ENCODE measurements at regions of chr10 and their contacts with region 1.

Region 1: GRCh38 chr10:17454161-17455014 is at the start of gene ST8SIA6:
- DNase-seq: no peak
- ATAC-seq: peak; percentile 61
- H3K4me3 ChIP-seq: peak within 1 kb of the TSS; percentile 59 to 85
- H3K27ac ChIP-seq: peak within 1 kb of the TSS; percentile 71
- H3K4me1 ChIP-seq: peaks cover 12 to 26% of the 10 kb centered on the region in 2 experiments; a peak in 3 of 4 replicates
- H3K27me3 ChIP-seq: no peaks in the 10 kb centered on the region
- CTCF ChIP-seq: no peak
- POLR2A ChIP-seq: no peak
- RAD21 ChIP-seq: no peak
- total RNA-seq, gene ST8SIA6: 1.3 TPM

Region 2: GRCh38 chr10:17029581-17030271 is 424.7 kb before region 1 on chr10:
- CTCF ChIA-PET with region 1: no interaction called
- POLR2A ChIA-PET with region 1: no interaction called
- RAD21 ChIA-PET with region 1: no interaction called
- intact Hi-C with region 1: no loop called
- DNase-seq: peak; percentile 52
- ATAC-seq: peak; percentile 86
- H3K4me3 ChIP-seq: peak overlapping the region; percentile 11 to 47
- H3K27ac ChIP-seq: peak overlapping the region; percentile 56
- H3K4me1 ChIP-seq: peaks cover 18 to 36% of the 10 kb centered on the region in 2 experiments; a peak in 3 of 4 replicates
- H3K27me3 ChIP-seq: no peaks in the 10 kb centered on the region
- CTCF ChIP-seq: no peak
- POLR2A ChIP-seq: no peak
- RAD21 ChIP-seq: 0 out of 2 replicates have a peak, but pooled peaks have one; percentile 9

Region 3: DNA sequence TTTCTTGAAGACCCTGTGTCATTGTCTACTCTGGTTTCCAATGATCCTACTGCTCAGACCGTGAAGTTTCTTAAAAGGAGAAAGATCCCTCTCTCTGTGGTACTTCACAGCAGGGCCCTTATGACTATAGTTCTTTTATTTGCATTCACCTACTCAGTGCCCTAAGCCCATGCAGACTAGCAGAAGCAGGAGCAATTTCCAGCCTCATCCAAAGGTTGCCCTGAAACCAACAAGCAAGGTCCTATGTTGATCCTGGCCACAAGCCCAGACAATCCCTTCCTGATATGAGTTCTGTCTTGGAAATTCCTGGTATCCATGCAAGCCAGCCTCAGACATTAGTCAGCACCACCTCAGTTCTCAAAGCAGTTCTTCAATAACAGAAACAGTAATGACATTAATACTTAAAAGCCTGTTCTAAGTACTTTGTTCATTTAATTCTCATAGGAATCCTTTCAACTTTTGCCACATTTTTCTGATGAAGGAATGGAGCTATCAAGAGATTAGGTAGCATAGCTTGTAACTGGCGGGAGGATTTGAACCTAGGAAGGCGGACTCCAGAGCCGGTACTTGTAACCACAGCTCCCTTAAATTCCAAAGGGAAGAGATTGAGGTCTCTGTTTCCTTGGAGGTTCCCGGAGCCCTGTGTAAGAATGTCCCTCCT is 58.1 kb after region 1 on chr10:
- CTCF ChIA-PET with region 1: interaction called, 5 read pairs
- POLR2A ChIA-PET with region 1: interaction called, 3 read pairs
- RAD21 ChIA-PET with region 1: no interaction called
- intact Hi-C with region 1: loop called (anchors 5 kb)
- DNase-seq: peak; percentile 93
- ATAC-seq: peak; percentile 86
- H3K4me3 ChIP-seq: peak overlapping the region in 1 of 2 experiments; percentile 33; a peak in 2 of 4 replicates
- H3K27ac ChIP-seq: peak overlapping the region; percentile 87
- H3K4me1 ChIP-seq: peaks cover 30 to 42% of the 10 kb centered on the region in 2 experiments
- H3K27me3 ChIP-seq: no peaks in the 10 kb centered on the region
- CTCF ChIP-seq: no peak
- POLR2A ChIP-seq: no peak
- RAD21 ChIP-seq: peak; percentile 25; the same call in 1 of the 2 replicates